ENCODE measurements at regions of chr16 and their contacts with region 1.

Region 1: GRCh38 chr16:56450986-56451752 is at the starts of genes NUDT21 and OGFOD1:
- DNase-seq: peak; percentile 92
- H3K4me3 Mint-ChIP-seq: peak within 1 kb of the TSS; percentile 97
- H3K27ac Mint-ChIP-seq: peak within 1 kb of the TSS; percentile 95
- H3K4me1 Mint-ChIP-seq: peaks cover 53% of the 10 kb centered on the region
- H3K27me3 Mint-ChIP-seq: no peaks in the 10 kb centered on the region
- total RNA-seq, gene NUDT21: 307 and 313 TPM in 2 replicates
- total RNA-seq, gene OGFOD1: 78.0 and 79.7 TPM in 2 replicates

Region 2: DNA sequence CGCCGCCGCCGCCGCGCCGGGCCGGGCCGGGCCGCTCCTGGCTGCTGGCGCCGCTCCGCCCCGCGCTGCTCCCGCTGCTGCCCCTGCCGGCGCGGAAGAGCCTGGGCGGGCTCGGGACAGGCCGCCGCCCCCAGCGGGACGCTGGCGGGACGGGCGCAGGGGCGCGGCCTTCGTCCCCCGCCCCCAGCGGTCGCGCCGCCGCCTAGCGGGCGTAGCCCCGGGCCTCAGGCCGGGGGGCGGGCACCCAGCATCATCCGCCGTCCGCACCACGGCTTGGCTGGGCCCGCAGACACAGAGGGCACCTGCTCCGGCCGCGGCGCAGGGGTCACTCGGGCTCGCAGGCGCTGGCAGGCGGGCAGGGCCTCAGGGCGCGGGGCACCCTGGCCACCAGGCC is 25.7 kb before region 1 on chr16 and contains the start of gene AMFR:
- intact Hi-C with region 1: loop called (anchors 1 kb)
- DNase-seq: peak; percentile 71
- H3K4me3 Mint-ChIP-seq: peak within 1 kb of the TSS; percentile 98
- H3K27ac Mint-ChIP-seq: peak within 1 kb of the TSS; percentile 88
- H3K4me1 Mint-ChIP-seq: peaks cover 41% of the 10 kb centered on the region
- H3K27me3 Mint-ChIP-seq: no peaks in the 10 kb centered on the region
- total RNA-seq, gene AMFR: 58.8 and 59.8 TPM in 2 replicates

Region 3: GRCh38 chr16:56519459-56520250 is 68.5 kb after region 1 on chr16 and contains the start of gene BBS2:
- intact Hi-C with region 1: loop called (anchors 5 kb)
- DNase-seq: peak; percentile 86
- H3K4me3 Mint-ChIP-seq: peak within 1 kb of the TSS; percentile 79
- H3K27ac Mint-ChIP-seq: peak within 1 kb of the TSS; percentile 50
- H3K4me1 Mint-ChIP-seq: peaks cover 8% of the 10 kb centered on the region
- H3K27me3 Mint-ChIP-seq: no peaks in the 10 kb centered on the region
- total RNA-seq, gene BBS2: 11.3 and 18.0 TPM in 2 replicates

Region 4: DNA sequence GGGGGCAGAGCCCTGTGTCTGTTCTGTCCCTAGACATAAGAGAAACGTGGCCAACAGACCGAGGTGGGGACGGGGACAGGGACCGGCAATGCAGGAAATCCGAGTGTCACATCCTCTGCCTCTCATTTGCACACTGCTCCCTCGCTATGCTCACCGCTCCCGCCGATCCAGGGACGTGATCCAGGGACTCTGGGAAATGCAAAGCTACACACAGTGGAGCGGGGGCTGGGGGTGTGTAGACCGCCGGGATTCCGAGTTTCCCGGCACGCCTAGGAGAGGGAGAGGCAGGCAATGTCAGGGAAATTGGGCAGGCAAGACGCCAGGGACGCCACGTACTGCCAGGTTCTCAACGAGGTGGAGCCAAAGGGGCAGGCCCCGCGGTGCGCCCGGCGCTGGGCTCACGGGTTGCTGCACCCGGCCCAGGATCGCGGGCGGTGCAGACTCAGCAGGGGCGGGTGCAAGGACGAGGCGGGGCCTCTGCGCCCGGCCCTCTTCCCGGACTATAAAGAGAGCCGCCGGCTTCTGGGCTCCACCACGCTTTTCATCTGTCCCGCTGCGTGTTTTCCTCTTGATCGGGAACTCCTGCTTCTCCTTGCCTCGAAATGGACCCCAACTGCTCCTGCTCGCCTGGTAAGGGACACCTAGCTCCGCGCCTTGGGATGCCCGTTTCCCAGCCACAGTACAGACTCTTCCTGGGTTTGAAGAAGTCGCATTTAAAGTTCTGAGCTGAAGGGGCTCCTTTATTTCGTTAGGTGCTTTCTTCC is 231.0 kb after region 1 on chr16 and contains the start of gene MT1X:
- intact Hi-C with region 1: loop called (anchors 5 kb)
- DNase-seq: peak; percentile 83
- H3K4me3 Mint-ChIP-seq: peak within 1 kb of the TSS; percentile 94
- H3K27ac Mint-ChIP-seq: peak within 1 kb of the TSS; percentile 84
- H3K4me1 Mint-ChIP-seq: peaks cover 24% of the 10 kb centered on the region
- H3K27me3 Mint-ChIP-seq: no peaks in the 10 kb centered on the region
- total RNA-seq, gene MT1X: 58.2 and 62.3 TPM in 2 replicates

Region 5: DNA sequence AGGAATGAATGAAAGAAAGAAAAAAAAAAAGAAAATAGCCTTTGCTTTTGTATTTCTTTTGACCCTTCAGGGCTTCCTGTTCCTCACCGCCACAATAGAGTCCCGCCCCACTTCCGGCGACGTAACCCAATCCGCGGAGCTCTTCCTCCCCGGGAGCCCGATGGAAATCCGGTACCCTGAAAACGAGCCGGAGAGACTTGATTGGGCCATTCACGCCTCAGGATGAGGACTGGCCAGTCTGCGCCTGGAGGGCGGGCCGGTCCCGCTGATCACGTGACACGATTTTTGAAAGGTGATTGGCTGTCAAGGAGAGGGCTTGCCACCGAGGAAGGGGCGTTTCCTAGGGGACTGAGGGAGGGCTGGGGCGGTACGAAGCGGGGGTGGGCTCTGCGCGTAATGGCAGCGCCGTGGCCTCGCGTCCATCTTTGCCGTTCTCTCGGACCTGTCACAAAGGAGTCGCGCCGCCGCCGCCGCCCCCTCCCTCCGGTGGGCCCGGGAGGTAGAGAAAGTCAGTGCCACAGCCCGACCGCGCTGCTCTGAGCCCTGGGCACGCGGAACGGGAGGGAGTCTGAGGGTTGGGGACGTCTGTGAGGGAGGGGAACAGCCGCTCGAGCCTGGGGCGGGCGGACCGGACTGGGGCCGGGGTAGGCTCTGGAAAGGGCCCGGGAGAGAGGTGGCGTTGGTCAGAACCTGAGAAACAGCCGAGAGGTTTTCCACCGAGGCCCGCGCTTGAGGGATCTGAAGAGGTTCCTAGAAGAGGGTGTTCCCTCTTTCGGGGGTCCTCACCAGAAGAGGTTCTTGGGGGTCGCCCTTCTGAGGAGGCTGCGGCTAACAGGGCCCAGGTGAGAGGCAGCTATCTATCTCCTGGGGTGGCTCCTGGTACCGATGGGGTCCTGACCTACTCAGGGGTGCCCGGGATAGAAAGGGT is 735.0 kb after region 1 on chr16 and contains the starts of genes PSME3IP1 and RSPRY1:
- intact Hi-C with region 1: loop called (anchors 5 kb)
- DNase-seq: peak; percentile 99
- H3K4me3 Mint-ChIP-seq: peak within 1 kb of the TSS; percentile 98
- H3K27ac Mint-ChIP-seq: peak within 1 kb of the TSS; percentile 96
- H3K4me1 Mint-ChIP-seq: peaks cover 36% of the 10 kb centered on the region
- H3K27me3 Mint-ChIP-seq: no peaks in the 10 kb centered on the region
- total RNA-seq, gene PSME3IP1: 109 and 125 TPM in 2 replicates
- total RNA-seq, gene RSPRY1: 33.3 and 43.0 TPM in 2 replicates